Left lung (tissue), 14 donors: ENCODE measurements at regions of chr11 and their contacts with region 1.

Region 1: DNA sequence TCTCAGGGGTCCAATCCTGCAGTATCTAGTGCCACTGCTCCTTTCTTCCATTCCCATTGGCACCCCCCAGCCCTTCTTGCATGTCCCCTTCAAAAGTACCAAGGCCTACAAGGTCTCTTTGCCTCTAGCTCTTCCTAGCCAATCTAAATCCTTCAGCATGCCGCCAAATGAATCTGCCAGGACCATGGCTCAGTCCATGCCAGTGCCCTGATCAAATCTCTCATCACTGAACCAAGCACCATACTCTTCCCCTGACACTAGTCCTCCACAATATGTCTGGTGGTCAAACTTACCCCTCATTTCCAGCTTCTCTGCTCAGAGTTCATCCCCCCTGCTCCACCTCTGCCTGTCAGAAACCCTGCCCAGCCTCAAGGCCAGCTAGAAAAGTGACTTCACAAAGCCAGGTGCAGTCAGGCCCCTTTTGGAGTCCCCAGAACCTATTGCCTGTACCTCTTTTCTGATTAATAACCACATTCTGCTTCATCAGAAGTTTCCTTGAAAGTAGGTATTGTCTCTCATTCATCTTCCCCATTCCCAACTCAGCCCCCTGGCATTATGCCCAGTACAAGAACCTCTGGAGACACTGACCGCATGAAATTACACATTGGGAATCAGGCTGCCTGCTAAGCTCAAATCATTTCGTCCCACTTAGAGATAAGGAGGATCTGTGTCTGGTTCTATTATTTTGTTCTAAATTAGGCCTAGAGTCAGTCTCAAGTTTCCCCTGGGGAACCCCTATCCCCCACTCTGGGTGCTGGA is 11.4 kb downstream of the FEN1 start:
- DNase-seq: no peak
- ATAC-seq: no peak
- H3K4me3 ChIP-seq: no peak overlapping the region
- H3K27ac ChIP-seq: no peak overlapping the region
- H3K4me1 ChIP-seq: no peaks in the 10 kb centered on the region
- H3K27me3 ChIP-seq: no peaks in the 10 kb centered on the region
- CTCF ChIP-seq: no peak

Region 2: GRCh38 chr11:61453695-61454094 is 350.4 kb before region 1 on chr11:
- intact Hi-C with region 1: no loop called
- DNase-seq: no peak
- ATAC-seq: no peak
- H3K4me3 ChIP-seq: no peak overlapping the region
- H3K27ac ChIP-seq: no peak overlapping the region
- H3K4me1 ChIP-seq: no peaks in the 10 kb centered on the region
- H3K27me3 ChIP-seq: no peaks in the 10 kb centered on the region
- CTCF ChIP-seq: no peak

Region 3: DNA sequence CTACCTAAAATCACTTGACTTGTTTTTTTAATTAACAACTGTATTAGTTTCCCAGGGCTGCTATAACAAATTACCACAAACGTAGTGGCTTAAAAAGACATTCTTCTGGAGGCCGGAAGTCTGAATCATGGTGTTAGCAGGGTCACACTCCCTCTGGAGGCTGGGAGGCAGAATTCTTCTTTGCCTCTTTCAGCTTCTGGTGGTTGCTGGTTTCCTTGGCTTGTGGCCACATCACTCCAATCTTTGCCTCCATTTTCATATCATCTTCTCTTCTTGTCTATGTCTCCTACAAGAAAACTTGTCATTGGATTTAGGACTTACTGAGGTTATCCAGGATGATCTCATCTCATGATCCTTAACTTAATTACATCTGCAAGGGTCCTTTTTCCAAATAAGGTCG is 312.4 kb after region 1 on chr11:
- intact Hi-C with region 1: loop called in 1 of 2 experiments (anchors 10 kb)
- DNase-seq: no peak
- ATAC-seq: no peak
- H3K4me3 ChIP-seq: no peak overlapping the region
- H3K27ac ChIP-seq: no peak overlapping the region
- H3K4me1 ChIP-seq: peaks cover 0 to 11% of the 10 kb centered on the region in 2 donors
- H3K27me3 ChIP-seq: no peaks in the 10 kb centered on the region
- CTCF ChIP-seq: no peak